ENCODE measurements at regions of chr11 and their contacts with region 1.

Region 1: GRCh38 chr11:129815596-129816461 is at the start of gene TMEM45B:
- DNase-seq: peak; percentile 27 to 57 (median 45)
- ATAC-seq: peak; percentile 38
- H3K4me3 ChIP-seq: peak within 1 kb of the TSS; percentile 54
- H3K4me3 Mint-ChIP-seq: peak within 1 kb of the TSS; percentile 83 to 91 (median 88)
- H3K27ac ChIP-seq: peak within 1 kb of the TSS; percentile 31
- H3K27ac Mint-ChIP-seq: peak within 1 kb of the TSS; percentile 84 to 99 (median 95)
- H3K4me1 ChIP-seq: peaks cover 5 to 9% of the 10 kb centered on the region in 2 donors
- H3K4me1 Mint-ChIP-seq: peaks cover 29 to 79% (median 61%) of the 10 kb centered on the region in 7 donors
- H3K27me3 ChIP-seq: no peaks in the 10 kb centered on the region
- H3K27me3 Mint-ChIP-seq: peaks cover 0 to 75% (median 17%) of the 10 kb centered on the region in 5 donors
- total RNA-seq, gene TMEM45B: 2.3 to 40.8 (median 3.6) TPM

Region 2: GRCh38 chr11:128052912-128053641 is 1762.8 kb before region 1 on chr11:
- CTCF ChIA-PET with region 1: no interaction called
- POLR2A ChIA-PET with region 1: no interaction called
- intact Hi-C with region 1: loop called in 1 of 2 experiments (anchors 10 kb)
- DNase-seq: peak in 7 of 9 donors; percentile 21 to 66 (median 61)
- ATAC-seq: peak; percentile 60
- H3K4me3 ChIP-seq: peak overlapping the region; percentile 28
- H3K4me3 Mint-ChIP-seq: peak overlapping the region; percentile 54 to 90 (median 80)
- H3K27ac ChIP-seq: peak overlapping the region; percentile 68
- H3K27ac Mint-ChIP-seq: peak overlapping the region; percentile 82 to 95 (median 90)
- H3K4me1 ChIP-seq: peaks cover 63 to 64% of the 10 kb centered on the region in 2 donors
- H3K4me1 Mint-ChIP-seq: peaks cover 40 to 81% (median 78%) of the 10 kb centered on the region in 7 donors
- H3K27me3 ChIP-seq: no peaks in the 10 kb centered on the region
- H3K27me3 Mint-ChIP-seq: no peaks in the 10 kb centered on the region

Region 3: GRCh38 chr11:129728575-129728974 is 87.3 kb before region 1 on chr11:
- CTCF ChIA-PET with region 1: no interaction called
- POLR2A ChIA-PET with region 1: no interaction called
- intact Hi-C with region 1: no loop called
- DNase-seq: no peak
- ATAC-seq: no peak
- H3K4me3 ChIP-seq: no peak overlapping the region
- H3K4me3 Mint-ChIP-seq: no peak overlapping the region
- H3K27ac ChIP-seq: no peak overlapping the region
- H3K27ac Mint-ChIP-seq: no peak overlapping the region
- H3K4me1 ChIP-seq: no peaks in the 10 kb centered on the region
- H3K4me1 Mint-ChIP-seq: peaks cover 0 to 11% (median 5%) of the 10 kb centered on the region in 7 donors
- H3K27me3 ChIP-seq: no peaks in the 10 kb centered on the region
- H3K27me3 Mint-ChIP-seq: no peaks in the 10 kb centered on the region

Region 4: GRCh38 chr11:129803533-129803932 is 12.3 kb before region 1 on chr11:
- CTCF ChIA-PET with region 1: interaction called, 7 read pairs
- POLR2A ChIA-PET with region 1: interaction called, 129 read pairs
- intact Hi-C with region 1: loop called in 1 of 2 experiments (anchors 1 kb)
- DNase-seq: no peak
- ATAC-seq: no peak
- H3K4me3 ChIP-seq: no peak overlapping the region
- H3K4me3 Mint-ChIP-seq: peak overlapping the region; percentile 64 to 85 (median 78)
- H3K27ac ChIP-seq: peak overlapping the region; percentile 17
- H3K27ac Mint-ChIP-seq: peak overlapping the region; percentile 44 to 99 (median 91)
- H3K4me1 ChIP-seq: peaks cover 0 to 31% of the 10 kb centered on the region in 2 donors
- H3K4me1 Mint-ChIP-seq: peaks cover 25 to 90% (median 73%) of the 10 kb centered on the region in 7 donors
- H3K27me3 ChIP-seq: no peaks in the 10 kb centered on the region
- H3K27me3 Mint-ChIP-seq: peaks cover 0 to 37% (median 0%) of the 10 kb centered on the region in 5 donors

Region 5: GRCh38 chr11:129846501-129847335 is 30.9 kb after region 1 on chr11:
- CTCF ChIA-PET with region 1: no interaction called
- POLR2A ChIA-PET with region 1: interaction called, 14 read pairs
- intact Hi-C with region 1: no loop called
- DNase-seq: peak in 1 of 9 donors; percentile 39
- ATAC-seq: peak; percentile 66
- H3K4me3 ChIP-seq: no peak overlapping the region
- H3K4me3 Mint-ChIP-seq: peak overlapping the region in 6 of 10 donors; percentile 5 to 68 (median 40)
- H3K27ac ChIP-seq: no peak overlapping the region
- H3K27ac Mint-ChIP-seq: peak overlapping the region; percentile 2 to 92 (median 73)
- H3K4me1 ChIP-seq: peaks cover 0 to 10% of the 10 kb centered on the region in 2 donors
- H3K4me1 Mint-ChIP-seq: peaks cover 6 to 68% (median 40%) of the 10 kb centered on the region in 7 donors
- H3K27me3 ChIP-seq: no peaks in the 10 kb centered on the region
- H3K27me3 Mint-ChIP-seq: peaks cover 0 to 5% (median 0%) of the 10 kb centered on the region in 5 donors

Region 6: GRCh38 chr11:129861702-129862113 is 45.9 kb after region 1 on chr11:
- CTCF ChIA-PET with region 1: no interaction called
- POLR2A ChIA-PET with region 1: interaction called, 79 read pairs
- intact Hi-C with region 1: no loop called
- DNase-seq: no peak
- ATAC-seq: no peak
- H3K4me3 ChIP-seq: no peak overlapping the region
- H3K4me3 Mint-ChIP-seq: peak overlapping the region in 3 of 10 donors; percentile 22 to 69 (median 58)
- H3K27ac ChIP-seq: peak overlapping the region; percentile 25
- H3K27ac Mint-ChIP-seq: peak overlapping the region; percentile 84 to 98 (median 95)
- H3K4me1 ChIP-seq: peaks cover 0 to 37% of the 10 kb centered on the region in 2 donors
- H3K4me1 Mint-ChIP-seq: peaks cover 19 to 70% (median 54%) of the 10 kb centered on the region in 7 donors
- H3K27me3 ChIP-seq: no peaks in the 10 kb centered on the region
- H3K27me3 Mint-ChIP-seq: no peaks in the 10 kb centered on the region